ENCODE measurements at regions of chr3 and their contacts with region 1.

Region 1: DNA sequence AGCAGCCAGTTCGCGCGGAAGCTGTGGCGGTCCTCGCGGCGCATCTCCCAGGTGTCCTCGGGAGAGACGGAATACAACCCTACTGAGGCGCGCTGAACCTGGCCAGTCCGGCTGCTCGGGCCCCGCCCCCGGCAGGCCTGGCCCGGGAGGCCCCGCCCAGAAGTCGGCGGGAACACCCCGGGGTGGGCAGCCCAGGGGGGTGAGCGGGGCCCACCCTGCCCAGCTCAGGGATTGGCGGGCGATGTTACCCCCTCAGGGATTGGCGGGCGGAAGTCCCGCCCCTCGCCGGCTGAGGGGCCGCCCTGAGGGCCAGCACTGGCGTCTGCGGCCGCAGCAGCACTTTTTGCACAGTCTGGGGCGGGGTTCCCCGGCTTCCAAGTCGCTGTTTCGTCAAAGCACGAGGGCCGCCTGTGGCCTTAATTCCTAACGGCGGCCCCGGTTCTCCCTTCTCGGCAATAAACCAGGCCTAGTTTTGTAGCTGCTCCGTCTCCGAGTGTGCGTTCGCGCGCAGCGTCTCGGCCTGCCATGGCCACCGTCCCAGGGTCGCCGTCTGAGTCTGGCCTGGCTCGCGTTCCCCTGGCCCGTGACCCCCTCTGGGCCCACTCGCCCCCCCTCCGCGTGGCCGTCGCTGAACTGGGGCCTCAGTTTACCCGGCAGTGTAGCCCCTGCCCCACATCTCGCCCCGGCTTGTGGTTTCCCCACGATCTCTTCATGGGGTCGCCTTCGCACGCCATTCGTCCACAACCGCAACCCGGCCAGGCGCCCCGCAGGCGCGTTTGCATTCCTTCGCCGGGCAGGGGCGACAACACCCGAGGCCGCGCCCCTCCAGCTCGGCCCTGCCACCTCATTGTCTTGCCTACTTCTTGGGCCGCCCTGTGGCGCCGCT is 30.0 kb downstream of the NBEAL2 start:
- DNase-seq: no peak
- ATAC-seq: no peak
- H3K4me3 ChIP-seq: no peak overlapping the region
- H3K27ac ChIP-seq: no peak overlapping the region
- H3K4me1 ChIP-seq: no peaks in the 10 kb centered on the region
- H3K27me3 ChIP-seq: no peaks in the 10 kb centered on the region
- CTCF ChIP-seq: no peak
- EP300 ChIP-seq: no peak
- POLR2A ChIP-seq: no peak
- RAD21 ChIP-seq: no peak

Region 2: GRCh38 chr3:47065681-47066080 is 56.2 kb after region 1 on chr3:
- CTCF ChIA-PET with region 1: no interaction called
- POLR2A ChIA-PET with region 1: no interaction called
- in situ Hi-C with region 1: no loop called
- intact Hi-C with region 1: loop called (anchors 10 kb)
- DNase-seq: peak; percentile 78
- ATAC-seq: peak; percentile 87
- H3K4me3 ChIP-seq: no peak overlapping the region
- H3K27ac ChIP-seq: peak overlapping the region; percentile 86
- H3K4me1 ChIP-seq: peaks cover 43% of the 10 kb centered on the region
- H3K27me3 ChIP-seq: no peaks in the 10 kb centered on the region
- CTCF ChIP-seq: no peak
- EP300 ChIP-seq: peak in 1 of 2 experiments; percentile 72; a peak in 2 of 4 replicates
- POLR2A ChIP-seq: no peak
- RAD21 ChIP-seq: no peak

Measured in HepG2 (cell line).